Heart left ventricle (tissue), 16 donors: ENCODE measurements at regions of chr12 and their contacts with region 1.

Region 1: GRCh38 chr12:20212658-20213555 is 155.4 kb upstream of the PDE3A start:
- DNase-seq: peak; percentile 83 to 91 (median 86)
- ATAC-seq: peak; percentile 97 to 99 (median 99)
- H3K4me3 ChIP-seq: peak overlapping the region in 8 of 12 donors; percentile 25 to 37 (median 28)
- H3K27ac ChIP-seq: peak overlapping the region; percentile 53 to 87 (median 83)
- H3K4me1 ChIP-seq: peaks cover 0 to 60% (median 25%) of the 10 kb centered on the region in 12 donors
- H3K27me3 ChIP-seq: no peaks in the 10 kb centered on the region
- CTCF ChIP-seq: peak in 1 of 12 donors; percentile 4
- POLR2A ChIP-seq: no peak

Region 2: DNA sequence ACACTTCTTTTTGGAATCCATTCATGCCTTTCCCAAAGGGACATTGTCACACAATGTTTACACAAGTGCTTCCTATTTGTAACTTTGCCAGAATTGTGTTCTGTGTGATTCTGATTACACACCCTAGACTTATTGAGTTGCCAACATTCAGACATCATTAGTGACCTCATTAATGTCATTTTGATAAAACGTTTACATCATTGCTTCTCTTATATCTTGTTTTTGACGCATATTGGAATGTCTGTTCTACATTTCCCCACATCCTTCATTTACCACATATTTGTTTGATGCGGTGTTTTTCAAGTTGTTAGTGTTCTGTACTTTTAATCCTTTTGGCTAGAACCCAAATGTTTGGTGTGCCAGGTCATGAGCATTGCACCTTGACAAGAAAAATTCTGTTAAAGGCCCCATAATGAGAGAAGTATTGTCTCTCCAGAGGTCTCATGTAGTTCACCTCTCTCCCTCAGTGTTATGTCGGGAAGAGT is 468.1 kb before region 1 on chr12:
- intact Hi-C with region 1: loop called in 3 of 10 experiments (anchors 5 to 10 kb)
- DNase-seq: no peak
- ATAC-seq: peak; percentile 78 to 92 (median 89)
- H3K4me3 ChIP-seq: no peak overlapping the region
- H3K27ac ChIP-seq: peak overlapping the region in 9 of 12 donors; percentile 28 to 75 (median 61)
- H3K4me1 ChIP-seq: peaks cover 4 to 27% (median 20%) of the 10 kb centered on the region in 12 donors
- H3K27me3 ChIP-seq: no peaks in the 10 kb centered on the region
- CTCF ChIP-seq: no peak
- POLR2A ChIP-seq: no peak

Region 3: DNA sequence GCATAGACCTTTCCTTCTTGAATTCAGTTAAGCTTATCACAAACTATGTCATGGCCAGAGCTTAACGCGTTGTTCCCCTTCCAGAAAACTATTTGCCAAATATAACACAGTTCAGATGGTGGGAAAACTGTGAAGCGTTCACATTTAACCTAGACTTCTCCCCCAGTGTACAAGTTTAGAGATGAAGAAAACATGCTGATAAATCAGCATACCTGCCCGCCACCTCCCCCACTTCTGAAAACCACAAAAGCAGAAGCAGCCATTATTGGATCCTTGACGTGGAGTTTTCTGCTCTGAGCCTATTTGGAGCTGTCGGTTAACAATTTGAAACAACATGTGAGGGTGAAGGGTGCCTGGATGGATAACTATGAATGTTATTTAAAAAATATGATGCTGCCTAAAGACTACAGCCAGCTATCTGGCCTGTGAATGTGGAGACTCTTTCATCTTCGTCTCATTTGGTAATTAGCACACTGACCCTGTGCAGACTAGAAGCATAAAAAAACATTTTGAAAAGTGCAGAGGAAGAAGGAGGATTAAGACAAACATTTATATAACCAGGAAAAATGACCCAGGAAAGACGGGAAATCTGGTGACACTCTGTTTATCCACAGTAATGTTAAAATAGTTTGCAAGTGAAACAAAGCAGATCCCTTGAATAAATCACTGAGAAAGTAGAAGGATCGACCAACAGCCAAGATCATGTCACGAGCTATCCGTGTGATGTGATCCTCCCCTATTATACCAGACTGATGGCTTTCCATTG is 365.4 kb before region 1 on chr12:
- intact Hi-C with region 1: loop called in 1 of 10 experiments (anchors 5 kb)
- DNase-seq: peak in 4 of 5 donors; percentile 38 to 57 (median 44)
- ATAC-seq: peak; percentile 87 to 89 (median 89)
- H3K4me3 ChIP-seq: peak overlapping the region in 7 of 12 donors; percentile 1 to 27 (median 12)
- H3K27ac ChIP-seq: peak overlapping the region; percentile 76 to 96 (median 86)
- H3K4me1 ChIP-seq: peaks cover 0 to 22% (median 13%) of the 10 kb centered on the region in 12 donors
- H3K27me3 ChIP-seq: no peaks in the 10 kb centered on the region
- CTCF ChIP-seq: no peak
- POLR2A ChIP-seq: no peak

Region 4: DNA sequence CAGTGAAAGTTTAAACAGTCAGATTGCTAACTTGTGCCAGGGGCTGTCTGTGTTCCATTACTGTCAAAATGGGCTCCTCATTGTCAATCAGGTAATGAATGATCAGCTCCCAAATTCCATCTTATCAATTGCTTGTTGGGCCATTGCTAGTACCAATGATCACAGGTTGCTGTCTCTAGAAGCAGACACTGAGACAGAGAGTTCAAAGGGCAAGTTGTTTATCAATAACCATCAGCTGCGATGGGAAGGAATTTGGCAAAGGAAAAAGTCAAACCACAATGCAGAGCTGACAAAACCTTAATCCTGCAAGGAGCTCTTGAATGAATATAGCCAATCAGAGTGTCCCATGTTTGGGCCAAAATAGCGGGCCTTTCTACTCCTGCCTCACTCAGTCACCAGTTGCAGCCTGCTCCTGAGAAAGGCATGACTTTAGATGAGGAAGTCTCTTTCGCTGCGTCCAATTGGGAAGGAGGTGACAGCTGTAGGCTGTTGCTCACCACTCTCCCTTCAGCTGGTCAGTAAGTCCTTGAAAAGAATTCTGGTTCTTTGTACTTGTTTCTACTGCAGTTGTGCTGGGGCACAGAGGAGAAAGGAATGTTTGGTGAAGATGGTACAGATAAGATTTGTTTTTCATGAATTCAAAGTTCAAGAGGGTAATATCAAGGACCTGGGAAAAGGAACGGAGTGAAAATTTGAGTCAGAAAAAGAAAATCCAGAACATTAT is 23.8 kb before region 1 on chr12:
- intact Hi-C with region 1: loop called in 1 of 10 experiments (anchors 2 kb)
- DNase-seq: peak in 1 of 5 donors; percentile 35
- ATAC-seq: peak in 2 of 4 donors; percentile 64 to 66
- H3K4me3 ChIP-seq: no peak overlapping the region
- H3K27ac ChIP-seq: peak overlapping the region in 1 of 12 donors; percentile 20
- H3K4me1 ChIP-seq: peaks cover 0 to 17% (median 0%) of the 10 kb centered on the region in 12 donors
- H3K27me3 ChIP-seq: no peaks in the 10 kb centered on the region
- CTCF ChIP-seq: no peak
- POLR2A ChIP-seq: no peak

Region 5: GRCh38 chr12:20264608-20265114 is 51.8 kb after region 1 on chr12:
- intact Hi-C with region 1: loop called in 2 of 10 experiments (anchors 5 kb)
- DNase-seq: no peak
- ATAC-seq: peak in 3 of 4 donors; percentile 28 to 39 (median 29)
- H3K4me3 ChIP-seq: no peak overlapping the region
- H3K27ac ChIP-seq: no peak overlapping the region
- H3K4me1 ChIP-seq: peaks cover 0 to 10% (median 0%) of the 10 kb centered on the region in 12 donors
- H3K27me3 ChIP-seq: no peaks in the 10 kb centered on the region
- CTCF ChIP-seq: no peak
- POLR2A ChIP-seq: no peak

Region 6: DNA sequence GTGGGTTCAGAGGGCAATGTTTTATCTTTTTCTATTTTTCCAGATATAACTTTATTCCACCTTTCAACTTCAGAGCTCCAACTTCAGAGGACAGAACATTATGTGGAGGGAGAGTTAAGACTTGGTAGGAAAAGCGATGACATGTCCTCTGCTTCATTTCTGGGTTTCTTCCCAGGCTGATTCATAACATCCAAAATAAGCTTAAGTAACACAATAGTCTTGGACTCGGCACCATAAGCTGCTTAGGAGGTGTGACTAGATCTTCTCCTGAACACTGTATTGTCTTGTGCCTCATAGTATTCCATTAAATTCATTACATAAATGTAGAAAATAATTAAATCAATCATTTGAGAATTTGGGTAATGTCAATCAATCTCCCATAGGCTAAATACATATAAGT is 59.9 kb after region 1 on chr12:
- intact Hi-C with region 1: loop called in 1 of 10 experiments (anchors 5 kb)
- DNase-seq: no peak
- ATAC-seq: peak; percentile 76 to 83 (median 80)
- H3K4me3 ChIP-seq: peak overlapping the region in 1 of 12 donors; percentile 30
- H3K27ac ChIP-seq: peak overlapping the region; percentile 28 to 91 (median 71)
- H3K4me1 ChIP-seq: peaks cover 0 to 53% (median 16%) of the 10 kb centered on the region in 12 donors
- H3K27me3 ChIP-seq: no peaks in the 10 kb centered on the region
- CTCF ChIP-seq: no peak
- POLR2A ChIP-seq: no peak

Region 7: GRCh38 chr12:21065845-21066244 is 852.9 kb after region 1 on chr12:
- intact Hi-C with region 1: no loop called
- DNase-seq: no peak
- ATAC-seq: no peak
- H3K4me3 ChIP-seq: no peak overlapping the region
- H3K27ac ChIP-seq: no peak overlapping the region
- H3K4me1 ChIP-seq: no peaks in the 10 kb centered on the region
- H3K27me3 ChIP-seq: no peaks in the 10 kb centered on the region
- CTCF ChIP-seq: peak in 7 of 12 donors; percentile 30 to 50 (median 36)
- POLR2A ChIP-seq: no peak